ENCODE measurements at regions of chr19 and their contacts with region 1.

Region 1: DNA sequence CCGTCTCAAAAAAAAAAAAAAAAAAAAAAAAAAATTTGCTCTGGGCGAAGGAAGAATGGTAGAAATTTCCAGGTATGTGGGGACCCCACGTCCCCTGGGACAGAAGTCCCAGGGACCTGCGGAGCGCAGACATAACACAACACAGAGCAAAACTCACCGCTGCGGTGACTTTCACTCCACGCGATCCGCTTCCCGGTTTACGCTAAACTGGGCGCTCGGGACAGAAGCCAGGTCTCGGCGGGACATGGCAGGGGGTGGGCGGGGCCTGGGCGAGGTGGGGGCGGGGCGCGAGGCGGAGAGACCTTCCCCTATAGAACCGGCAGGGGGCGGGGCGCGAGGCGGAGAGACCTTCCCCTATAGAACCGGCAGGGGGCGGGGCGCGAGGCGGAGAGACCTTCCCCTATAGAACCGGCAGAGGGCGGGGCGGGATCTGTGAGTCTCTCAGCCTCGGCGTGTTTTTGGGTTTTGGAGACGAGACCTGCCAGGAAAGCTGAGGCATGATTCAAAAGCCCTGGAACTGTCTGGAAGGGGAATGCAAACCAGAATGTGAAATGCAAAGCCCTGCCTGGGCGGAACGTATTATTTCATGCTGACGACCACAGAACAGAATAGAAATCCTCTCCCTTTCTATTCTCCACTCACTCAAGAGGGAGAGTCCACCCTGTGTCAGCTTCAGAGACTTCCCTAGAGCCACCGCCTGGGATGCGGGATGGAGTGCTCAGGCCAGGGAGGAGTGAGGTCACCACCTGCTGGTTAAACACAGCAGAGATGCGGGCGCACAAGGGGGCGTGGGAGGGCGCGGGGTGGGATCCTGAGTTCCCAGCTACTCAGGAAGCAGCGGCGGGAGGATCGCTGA is 20.2 kb upstream of the ERVV-1 start:
- DNase-seq: peak; percentile 90
- ATAC-seq: peak; percentile 62
- H3K4me3 Mint-ChIP-seq: peak overlapping the region; percentile 82
- H3K27ac Mint-ChIP-seq: peak overlapping the region; percentile 80; the same call in 1 of the 2 replicates
- H3K4me1 Mint-ChIP-seq: peaks cover 19% of the 10 kb centered on the region
- H3K27me3 Mint-ChIP-seq: peaks cover 96% of the 10 kb centered on the region
- CTCF ChIP-seq: peak; percentile 90

Region 2: DNA sequence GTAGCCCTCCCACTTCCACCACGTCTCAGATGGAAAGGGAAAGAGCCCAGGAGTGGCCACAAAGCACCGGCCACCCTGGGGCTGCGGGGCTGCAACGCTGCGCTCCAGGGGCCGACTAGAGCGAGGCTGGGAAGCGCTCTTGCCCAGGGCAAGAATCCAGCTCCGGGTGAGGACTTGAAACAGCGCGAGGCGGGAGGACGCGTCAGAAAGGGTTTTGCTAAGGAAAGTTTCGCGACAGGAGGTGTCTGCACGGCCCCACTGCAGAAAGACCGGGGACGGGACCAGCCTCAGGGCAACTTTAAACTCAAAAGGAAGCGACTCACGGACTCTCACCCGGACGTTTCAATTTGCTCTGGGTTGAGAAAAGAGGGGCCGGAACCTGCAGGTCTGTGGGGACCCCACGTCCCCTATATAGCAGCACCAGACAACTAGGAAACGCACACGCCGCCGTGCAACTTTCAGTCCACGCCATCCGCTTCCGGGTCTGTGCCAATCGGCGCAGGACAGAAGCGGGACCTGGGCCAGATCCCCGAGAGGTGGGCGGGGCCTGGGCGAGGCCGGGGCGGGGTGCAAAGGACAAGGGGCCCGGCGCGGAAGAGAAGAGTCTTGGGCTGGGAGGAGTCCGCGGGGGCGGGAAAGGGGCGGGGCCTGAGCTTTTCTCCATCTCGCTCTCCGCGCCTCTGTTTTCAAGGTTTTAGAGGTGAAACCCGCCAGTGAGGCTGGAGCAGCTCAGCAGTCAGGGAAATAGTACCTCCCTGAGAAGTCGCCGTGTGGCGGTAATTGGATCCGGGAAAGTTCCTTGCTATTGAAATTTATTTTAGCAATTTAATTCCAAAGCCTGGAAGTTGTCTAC is 30.9 kb before region 1 on chr19 and contains the start of gene ZNF816:
- CTCF ChIA-PET with region 1: interaction called, 16 read pairs
- POLR2A ChIA-PET with region 1: interaction called, 3 read pairs
- DNase-seq: peak; percentile 99
- ATAC-seq: peak; percentile 98
- H3K4me3 Mint-ChIP-seq: peak within 1 kb of the TSS; percentile 99
- H3K27ac Mint-ChIP-seq: peak within 1 kb of the TSS; percentile 98
- H3K4me1 Mint-ChIP-seq: peaks cover 21% of the 10 kb centered on the region
- H3K27me3 Mint-ChIP-seq: peaks cover under 1% of the 10 kb centered on the region; the same call in 1 of the 2 replicates
- CTCF ChIP-seq: no peak
- total RNA-seq, gene ZNF816: 10.8 to 15.3 TPM (median 12.4 TPM) in 3 replicates

Region 3: DNA sequence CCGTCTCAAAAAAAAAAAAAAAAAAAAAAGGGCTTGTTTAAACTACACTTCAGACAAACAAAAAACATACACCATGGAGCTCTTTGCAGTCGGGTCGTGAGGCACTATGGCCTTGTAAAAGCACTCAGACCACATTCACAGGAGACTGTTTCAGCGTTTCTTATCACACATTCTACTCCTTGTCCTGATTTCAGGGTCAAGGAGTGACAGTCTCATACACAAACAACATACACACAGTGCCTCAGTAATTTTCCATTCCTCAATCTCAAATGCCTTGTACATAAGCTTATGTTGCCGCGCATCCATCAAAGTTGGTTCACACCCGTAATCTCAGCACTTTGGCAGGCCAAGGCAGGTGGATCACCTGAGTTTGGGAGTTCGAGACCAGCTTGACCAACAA is 18.9 kb before region 1 on chr19:
- CTCF ChIA-PET with region 1: interaction called, 11 read pairs
- POLR2A ChIA-PET with region 1: no interaction called
- DNase-seq: no peak
- ATAC-seq: no peak
- H3K4me3 Mint-ChIP-seq: no peak overlapping the region
- H3K27ac Mint-ChIP-seq: no peak overlapping the region
- H3K4me1 Mint-ChIP-seq: no peaks in the 10 kb centered on the region
- H3K27me3 Mint-ChIP-seq: no peaks in the 10 kb centered on the region; the same call in 1 of the 2 replicates
- CTCF ChIP-seq: no peak

Region 4: DNA sequence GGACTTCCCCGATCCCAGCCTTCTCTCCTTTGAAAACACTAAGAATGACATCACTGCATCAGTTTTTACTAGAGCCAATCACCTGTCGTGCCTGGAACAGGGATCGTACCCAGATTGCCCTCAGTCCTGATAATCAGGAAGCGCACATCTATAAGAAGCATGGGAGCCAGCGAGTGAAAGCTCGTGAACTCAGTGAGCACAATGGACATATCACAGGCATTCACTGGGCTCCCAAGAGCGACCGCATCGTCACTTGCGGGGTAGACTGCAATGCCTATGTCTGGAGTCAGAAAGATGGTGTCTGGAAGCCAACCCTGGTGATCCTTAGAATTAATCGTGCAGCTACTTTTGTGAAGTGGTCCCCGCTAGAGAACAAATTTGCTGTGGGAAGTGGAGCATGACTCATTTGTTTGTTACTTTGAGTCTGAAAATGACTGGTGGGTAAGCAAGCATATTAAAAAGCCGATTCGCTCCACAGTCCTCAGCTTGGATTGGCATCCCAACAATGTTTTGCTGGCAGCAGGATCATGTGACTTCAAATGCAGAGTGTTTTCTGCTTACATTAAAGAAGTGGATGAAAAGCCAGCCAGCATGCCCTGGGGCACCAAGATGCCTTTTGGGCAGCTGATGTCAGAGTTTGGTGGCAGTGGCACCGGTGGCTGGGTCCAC is 10.6 kb after region 1 on chr19:
- CTCF ChIA-PET with region 1: interaction called, 26 read pairs
- POLR2A ChIA-PET with region 1: no interaction called
- DNase-seq: no peak
- ATAC-seq: no peak
- H3K4me3 Mint-ChIP-seq: no peak overlapping the region
- H3K27ac Mint-ChIP-seq: no peak overlapping the region
- H3K4me1 Mint-ChIP-seq: peaks cover 10% of the 10 kb centered on the region
- H3K27me3 Mint-ChIP-seq: peaks cover 50% of the 10 kb centered on the region
- CTCF ChIP-seq: no peak

Region 5: DNA sequence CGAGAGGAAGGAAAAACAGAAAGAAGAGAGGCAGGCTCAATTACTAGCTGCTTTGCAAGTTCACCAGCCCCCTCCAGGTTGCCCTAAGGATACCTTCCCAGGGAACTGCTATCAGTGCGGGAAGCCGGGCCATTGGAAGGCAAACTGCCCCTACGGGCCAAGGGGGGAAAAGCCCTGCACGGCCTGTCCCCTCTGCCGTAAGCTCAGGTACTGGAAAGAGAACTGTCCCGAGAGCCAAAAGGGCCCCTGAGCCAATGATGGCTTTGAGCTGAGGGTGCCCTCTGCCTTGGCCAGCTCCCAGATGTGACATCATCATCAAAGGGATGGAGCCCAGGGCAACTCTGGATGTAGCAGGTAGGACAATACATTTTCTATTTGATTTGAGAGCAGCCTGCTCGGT is 17.0 kb after region 1 on chr19:
- CTCF ChIA-PET with region 1: interaction called, 26 read pairs
- POLR2A ChIA-PET with region 1: interaction called, 4 read pairs
- DNase-seq: peak; percentile 81
- ATAC-seq: peak; percentile 99
- H3K4me3 Mint-ChIP-seq: no peak overlapping the region
- H3K27ac Mint-ChIP-seq: no peak overlapping the region
- H3K4me1 Mint-ChIP-seq: peaks cover 8% of the 10 kb centered on the region
- H3K27me3 Mint-ChIP-seq: peaks cover 10% of the 10 kb centered on the region
- CTCF ChIP-seq: no peak

Region 6: GRCh38 chr19:53019684-53020083 is 26.1 kb after region 1 on chr19:
- CTCF ChIA-PET with region 1: interaction called, 27 read pairs
- POLR2A ChIA-PET with region 1: no interaction called
- DNase-seq: peak; percentile 89
- ATAC-seq: peak; percentile 100
- H3K4me3 Mint-ChIP-seq: no peak overlapping the region
- H3K27ac Mint-ChIP-seq: no peak overlapping the region
- H3K4me1 Mint-ChIP-seq: 0 out of 2 replicates have a peak, but pooled peaks cover 4% of the 10 kb centered on the region
- H3K27me3 Mint-ChIP-seq: peaks cover 17% of the 10 kb centered on the region
- CTCF ChIP-seq: peak; percentile 18; the same call in 1 of the 2 replicates